A673 (cell line): ENCODE measurements at regions of chr17 and their contacts with region 1.

Region 1: GRCh38 chr17:16537130-16537458 is 31.9 kb downstream of the ZNF287 start:
- DNase-seq: no peak
- H3K4me3 ChIP-seq: no peak overlapping the region
- H3K27ac ChIP-seq: no peak overlapping the region
- H3K4me1 ChIP-seq: peaks cover 5% of the 10 kb centered on the region
- H3K27me3 ChIP-seq: no peaks in the 10 kb centered on the region
- CTCF ChIP-seq: 0 out of 2 replicates have a peak, but pooled peaks have one; percentile 17

Region 2: GRCh38 chr17:16515933-16516332 is 21.2 kb before region 1 on chr17:
- CTCF ChIA-PET with region 1: no interaction called
- POLR2A ChIA-PET with region 1: no interaction called
- intact Hi-C with region 1: no loop called
- DNase-seq: no peak
- H3K4me3 ChIP-seq: no peak overlapping the region
- H3K27ac ChIP-seq: no peak overlapping the region
- H3K4me1 ChIP-seq: peaks cover 22% of the 10 kb centered on the region
- H3K27me3 ChIP-seq: peaks cover 7% of the 10 kb centered on the region
- CTCF ChIP-seq: no peak

Region 3: DNA sequence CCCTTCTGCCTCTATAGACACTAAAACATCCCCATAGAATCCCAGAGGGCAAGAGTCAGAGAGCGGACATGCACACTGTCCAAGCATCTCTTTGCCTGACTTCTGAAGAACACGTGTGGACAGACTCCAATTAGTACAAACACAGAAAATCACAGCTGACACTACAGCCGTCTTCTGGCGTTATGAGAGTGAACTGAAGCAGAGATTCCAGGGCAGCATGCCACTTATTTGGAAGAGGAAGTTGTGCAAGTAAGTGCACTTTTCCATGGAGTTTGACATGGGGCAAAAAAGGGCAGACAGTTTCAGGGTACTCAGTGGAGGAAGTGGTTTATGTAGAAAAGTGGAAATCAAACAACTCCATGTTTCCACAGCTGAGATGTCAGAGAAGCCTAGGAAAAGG is 48.7 kb after region 1 on chr17:
- CTCF ChIA-PET with region 1: interaction called, 5 read pairs
- POLR2A ChIA-PET with region 1: no interaction called
- intact Hi-C with region 1: loop called (anchors 2 kb)
- DNase-seq: no peak
- H3K4me3 ChIP-seq: no peak overlapping the region
- H3K27ac ChIP-seq: no peak overlapping the region
- H3K4me1 ChIP-seq: no peaks in the 10 kb centered on the region
- H3K27me3 ChIP-seq: no peaks in the 10 kb centered on the region
- CTCF ChIP-seq: no peak

Region 4: GRCh38 chr17:16991349-16992009 is 454.4 kb after region 1 on chr17:
- CTCF ChIA-PET with region 1: no interaction called
- POLR2A ChIA-PET with region 1: no interaction called
- intact Hi-C with region 1: loop called (anchors 5 kb)
- DNase-seq: peak; percentile 88
- H3K4me3 ChIP-seq: no peak overlapping the region
- H3K27ac ChIP-seq: no peak overlapping the region
- H3K4me1 ChIP-seq: peaks cover 16% of the 10 kb centered on the region
- H3K27me3 ChIP-seq: no peaks in the 10 kb centered on the region
- CTCF ChIP-seq: peak; percentile 96